Naive thymus-derived CD4-positive, alpha-beta T cell (primary cell): ENCODE measurements at regions of chr6 and their contacts with region 1.

Region 1: DNA sequence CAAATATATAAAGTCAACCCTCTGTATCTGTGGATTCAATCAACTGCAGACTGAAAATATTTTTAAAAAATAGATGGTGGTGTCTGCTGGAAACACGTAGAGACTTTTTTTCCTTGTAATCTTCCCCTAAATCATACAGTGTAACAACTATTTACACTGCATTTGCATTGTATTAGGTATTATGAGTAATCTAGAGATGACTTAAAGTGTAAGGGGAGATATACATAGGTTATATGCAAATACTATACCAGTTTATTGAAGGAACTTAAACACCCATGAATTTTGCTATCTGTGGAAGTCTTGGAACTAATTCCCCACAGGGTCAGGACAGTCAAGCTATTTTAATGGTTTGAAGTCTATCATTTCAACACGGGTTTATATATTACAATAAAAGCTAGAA is 10.2 kb downstream of the HDAC2 start:
- DNase-seq: no peak
- ATAC-seq: no peak
- H3K4me3 ChIP-seq: no peak overlapping the region
- H3K4me3 Mint-ChIP-seq: no peak overlapping the region
- H3K27ac ChIP-seq: no peak overlapping the region
- H3K27ac Mint-ChIP-seq: peak overlapping the region in 1 of 9 donors; percentile 12
- H3K4me1 ChIP-seq: peaks cover 5 to 6% of the 10 kb centered on the region in 2 donors
- H3K4me1 Mint-ChIP-seq: peaks cover 3 to 73% (median 60%) of the 10 kb centered on the region in 7 donors
- H3K27me3 ChIP-seq: no peaks in the 10 kb centered on the region
- H3K27me3 Mint-ChIP-seq: no peaks in the 10 kb centered on the region

Region 2: GRCh38 chr6:113763883-113764282 is 196.9 kb before region 1 on chr6:
- CTCF ChIA-PET with region 1: no interaction called
- POLR2A ChIA-PET with region 1: no interaction called
- intact Hi-C with region 1: no loop called
- DNase-seq: no peak
- ATAC-seq: peak; percentile 75
- H3K4me3 ChIP-seq: no peak overlapping the region
- H3K4me3 Mint-ChIP-seq: no peak overlapping the region
- H3K27ac ChIP-seq: no peak overlapping the region
- H3K27ac Mint-ChIP-seq: no peak overlapping the region
- H3K4me1 ChIP-seq: no peaks in the 10 kb centered on the region
- H3K4me1 Mint-ChIP-seq: no peaks in the 10 kb centered on the region
- H3K27me3 ChIP-seq: no peaks in the 10 kb centered on the region
- H3K27me3 Mint-ChIP-seq: peaks cover 0 to 3% (median 0%) of the 10 kb centered on the region in 5 donors

Region 3: GRCh38 chr6:113944701-113945100 is 16.1 kb before region 1 on chr6:
- CTCF ChIA-PET with region 1: interaction called, 4 read pairs
- POLR2A ChIA-PET with region 1: no interaction called
- intact Hi-C with region 1: loop called in 1 of 2 experiments (anchors 2 kb)
- DNase-seq: no peak
- ATAC-seq: no peak
- H3K4me3 ChIP-seq: no peak overlapping the region
- H3K4me3 Mint-ChIP-seq: no peak overlapping the region
- H3K27ac ChIP-seq: no peak overlapping the region
- H3K27ac Mint-ChIP-seq: no peak overlapping the region
- H3K4me1 ChIP-seq: no peaks in the 10 kb centered on the region
- H3K4me1 Mint-ChIP-seq: peaks cover 0 to 6% (median 0%) of the 10 kb centered on the region in 7 donors
- H3K27me3 ChIP-seq: no peaks in the 10 kb centered on the region
- H3K27me3 Mint-ChIP-seq: no peaks in the 10 kb centered on the region

Region 4: DNA sequence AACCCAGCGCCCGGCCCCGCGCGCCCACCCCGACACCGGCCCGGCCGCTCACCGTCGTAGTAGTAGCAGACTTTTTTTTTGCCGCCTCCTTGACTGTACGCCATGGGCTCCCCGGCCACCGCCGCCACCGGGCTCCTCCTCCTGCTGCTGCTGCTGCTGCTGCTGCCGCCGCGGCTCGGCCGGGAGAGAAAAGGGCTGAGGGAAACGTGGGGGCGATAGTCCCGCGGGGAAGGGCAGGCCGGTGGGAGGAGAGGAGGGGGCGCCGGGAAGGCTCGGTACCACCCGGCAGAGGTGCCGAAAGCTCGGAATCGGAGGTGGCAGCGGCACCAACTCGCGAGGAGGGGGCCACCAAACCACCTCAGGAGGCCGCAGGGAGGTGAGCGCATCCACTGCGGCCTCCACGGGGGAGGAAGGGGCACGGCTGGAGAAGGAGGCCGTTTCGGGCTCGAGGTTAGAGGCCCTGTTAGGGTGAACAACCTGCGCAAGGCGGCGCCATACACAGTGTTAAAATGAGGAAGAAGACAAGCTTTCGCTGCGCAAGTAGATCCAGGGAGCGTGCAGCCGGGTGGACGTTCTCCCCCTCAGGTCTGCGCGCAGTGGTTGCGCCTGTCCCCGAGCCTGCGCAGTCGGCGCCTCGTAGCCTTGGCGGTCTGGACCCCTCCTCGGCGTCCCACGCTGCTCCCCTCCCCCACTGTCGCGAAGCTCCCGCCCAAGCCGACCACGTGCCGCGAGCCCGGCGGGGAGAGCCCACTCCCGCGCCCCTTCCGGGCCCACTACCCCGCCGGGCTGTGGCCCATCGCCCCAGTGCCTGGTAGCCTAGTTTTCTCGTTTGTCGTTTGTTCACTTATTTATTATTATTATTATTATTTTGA is 10.2 kb after region 1 on chr6 and contains the start of gene HDAC2:
- CTCF ChIA-PET with region 1: interaction called, 4 read pairs
- POLR2A ChIA-PET with region 1: interaction called, 4 read pairs
- intact Hi-C with region 1: loop called in 1 of 2 experiments (anchors 1 kb)
- DNase-seq: peak; percentile 77 to 91 (median 85)
- ATAC-seq: peak; percentile 90
- H3K4me3 ChIP-seq: peak within 1 kb of the TSS; percentile 96
- H3K4me3 Mint-ChIP-seq: peak within 1 kb of the TSS; percentile 91 to 99 (median 97)
- H3K27ac ChIP-seq: peak within 1 kb of the TSS; percentile 92
- H3K27ac Mint-ChIP-seq: peak within 1 kb of the TSS; percentile 86 to 99 (median 97)
- H3K4me1 ChIP-seq: peaks cover 15 to 18% of the 10 kb centered on the region in 2 donors
- H3K4me1 Mint-ChIP-seq: peaks cover 24 to 46% (median 39%) of the 10 kb centered on the region in 7 donors
- H3K27me3 ChIP-seq: no peaks in the 10 kb centered on the region
- H3K27me3 Mint-ChIP-seq: peaks cover 0 to 6% (median 0%) of the 10 kb centered on the region in 5 donors
- total RNA-seq, gene HDAC2: 46.6 to 72.0 (median 54.7) TPM